Activated CD4-positive, alpha-beta T cell treated with anti-CD3 and anti-CD28 coated beads for 36 hours (primary cell): ENCODE measurements at regions of chr18 and their contacts with region 1.

Region 1: GRCh38 chr18:62714671-62715435 is 488 bp upstream of the PHLPP1 start:
- DNase-seq: peak; percentile 95
- ATAC-seq: peak; percentile 81
- H3K4me3 Mint-ChIP-seq: peak overlapping the region; percentile 81
- H3K27ac Mint-ChIP-seq: peak overlapping the region; percentile 69
- H3K4me1 Mint-ChIP-seq: peaks cover 28% of the 10 kb centered on the region
- H3K27me3 Mint-ChIP-seq: no peaks in the 10 kb centered on the region

Region 2: DNA sequence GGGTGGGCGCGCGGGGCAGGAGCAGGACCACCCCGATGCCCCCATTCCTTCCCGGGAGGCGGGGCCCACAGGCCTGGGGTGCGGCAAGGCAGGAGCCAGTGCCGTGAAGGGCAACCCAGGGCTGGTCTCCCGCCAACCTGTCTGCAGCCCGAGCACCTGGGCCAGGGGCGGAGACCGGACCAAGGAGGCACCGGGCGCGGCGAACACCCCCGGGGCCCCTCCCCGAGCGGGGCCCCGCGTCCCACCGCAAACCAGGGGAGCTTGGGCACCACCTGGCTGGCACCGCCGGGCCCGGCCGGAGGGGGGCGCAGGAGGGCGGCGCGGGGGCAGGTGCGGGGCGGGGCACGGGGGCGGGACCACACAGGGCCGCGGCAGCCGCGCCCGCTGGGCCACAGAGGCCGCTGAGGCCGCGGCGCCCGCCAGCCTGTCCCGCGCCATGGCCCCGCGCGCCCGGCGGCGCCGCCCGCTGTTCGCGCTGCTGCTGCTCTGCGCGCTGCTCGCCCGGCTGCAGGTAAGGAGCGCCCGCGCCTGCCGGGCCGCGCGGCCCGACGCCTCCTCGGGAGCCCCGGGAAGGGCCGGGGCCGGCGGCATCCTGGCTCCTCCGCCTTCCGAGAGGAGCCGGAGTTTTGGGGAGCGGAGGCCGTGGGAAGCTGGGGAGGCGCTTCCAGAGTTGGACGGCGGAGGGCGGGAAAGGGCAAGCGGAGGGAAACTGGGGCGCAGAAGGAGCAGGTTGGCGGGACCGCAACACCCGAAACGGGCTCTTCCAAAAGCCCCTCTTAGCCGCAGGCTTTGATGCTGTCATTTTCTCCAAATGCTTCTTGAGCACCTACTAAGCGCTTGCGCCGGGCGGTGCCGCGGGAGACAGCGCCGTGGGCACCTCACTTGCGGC is 389.7 kb before region 1 on chr18 and contains the start of gene TNFRSF11A:
- CTCF ChIA-PET with region 1: no interaction called
- POLR2A ChIA-PET with region 1: no interaction called
- intact Hi-C with region 1: loop called in 1 of 2 experiments (anchors 5 kb)
- DNase-seq: peak; percentile 85
- ATAC-seq: peak; percentile 77
- H3K4me3 Mint-ChIP-seq: peak within 1 kb of the TSS; percentile 78
- H3K27ac Mint-ChIP-seq: peak within 1 kb of the TSS; percentile 64
- H3K4me1 Mint-ChIP-seq: peaks cover 29% of the 10 kb centered on the region
- H3K27me3 Mint-ChIP-seq: peaks cover 70% of the 10 kb centered on the region
- total RNA-seq, gene TNFRSF11A: 6.9 to 9.3 TPM

Region 3: DNA sequence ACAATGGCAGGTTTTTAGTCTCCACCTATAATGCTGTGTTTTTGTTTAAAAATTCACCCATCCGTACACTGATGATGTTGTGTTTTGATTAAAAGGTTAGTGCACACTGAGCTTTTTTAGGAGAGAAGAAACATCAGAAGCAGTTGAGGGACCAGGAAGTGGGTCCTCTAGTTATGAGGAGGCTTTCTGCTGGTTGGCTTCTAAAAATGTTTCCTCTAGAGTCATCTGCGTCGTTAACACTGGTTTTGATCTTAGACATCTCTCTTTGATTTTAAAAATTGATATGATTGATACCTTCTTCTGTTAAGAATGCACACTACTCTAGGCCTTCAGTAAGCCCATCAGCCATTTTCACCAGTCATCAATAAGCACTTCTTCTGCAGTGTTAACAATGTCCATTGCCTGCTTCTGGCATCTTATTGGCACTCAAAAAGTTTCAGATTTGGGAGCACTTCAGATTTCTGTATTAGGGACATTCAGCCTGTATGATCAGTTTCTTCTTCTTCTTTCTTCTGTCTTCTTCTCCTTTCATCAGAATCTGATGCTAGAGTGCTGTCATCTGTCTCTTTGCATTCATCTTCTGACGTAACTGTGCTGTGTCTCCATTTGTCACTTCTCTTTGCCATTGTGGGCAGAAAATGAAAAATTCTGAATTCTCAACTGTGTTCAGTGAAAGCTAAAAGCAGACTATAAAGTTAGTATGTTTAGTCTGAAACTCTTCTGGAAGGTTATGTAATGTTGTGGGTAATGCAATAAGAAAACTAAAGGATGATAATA is 56.8 kb after region 1 on chr18:
- CTCF ChIA-PET with region 1: interaction called, 5 read pairs
- POLR2A ChIA-PET with region 1: no interaction called
- intact Hi-C with region 1: loop called in 1 of 2 experiments (anchors 2 kb)
- DNase-seq: peak; percentile 13
- ATAC-seq: peak; percentile 94
- H3K4me3 Mint-ChIP-seq: no peak overlapping the region
- H3K27ac Mint-ChIP-seq: peak overlapping the region; percentile 21
- H3K4me1 Mint-ChIP-seq: peaks cover 28% of the 10 kb centered on the region
- H3K27me3 Mint-ChIP-seq: no peaks in the 10 kb centered on the region

Region 4: GRCh38 chr18:62957885-62958472 is 243.1 kb after region 1 on chr18:
- CTCF ChIA-PET with region 1: interaction called, 10 read pairs
- POLR2A ChIA-PET with region 1: no interaction called
- intact Hi-C with region 1: loop called (anchors 1 kb)
- DNase-seq: peak; percentile 74
- ATAC-seq: peak; percentile 84
- H3K4me3 Mint-ChIP-seq: no peak overlapping the region
- H3K27ac Mint-ChIP-seq: no peak overlapping the region
- H3K4me1 Mint-ChIP-seq: peaks cover 9% of the 10 kb centered on the region
- H3K27me3 Mint-ChIP-seq: no peaks in the 10 kb centered on the region

Region 5: DNA sequence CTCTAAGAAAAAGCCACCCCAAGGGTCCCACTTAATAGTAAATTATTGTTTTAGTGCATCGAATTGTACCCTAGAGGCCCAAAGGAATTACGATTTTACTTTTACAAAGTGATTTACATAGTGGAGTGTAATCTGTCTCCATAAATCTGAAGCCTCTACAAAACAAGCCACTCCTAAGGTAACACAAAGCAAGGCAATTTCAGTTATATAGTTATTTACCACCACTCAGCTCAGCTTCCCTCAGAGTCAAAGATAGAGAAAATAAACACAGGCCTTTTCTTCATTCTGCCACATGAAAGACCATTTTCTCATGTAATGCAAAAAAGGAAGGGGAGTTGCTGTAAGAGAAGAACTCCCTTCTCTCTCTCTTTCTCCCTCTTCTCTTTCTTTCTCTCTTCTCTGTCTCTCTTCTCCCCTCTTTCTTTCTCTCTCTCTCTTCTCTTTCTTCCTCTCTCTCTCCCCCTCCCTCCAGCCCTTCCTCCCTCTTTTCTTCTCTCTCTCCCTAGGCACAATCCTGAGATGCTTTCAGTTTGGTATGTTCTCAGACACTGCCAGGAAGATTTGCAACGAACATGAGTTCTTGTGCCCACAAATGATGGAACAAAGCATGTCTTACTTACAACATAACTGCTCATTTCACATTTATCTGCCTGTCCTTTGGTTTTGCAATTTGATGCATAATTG is 340.2 kb after region 1 on chr18:
- CTCF ChIA-PET with region 1: no interaction called
- POLR2A ChIA-PET with region 1: no interaction called
- intact Hi-C with region 1: no loop called
- DNase-seq: no peak
- ATAC-seq: no peak
- H3K4me3 Mint-ChIP-seq: no peak overlapping the region
- H3K27ac Mint-ChIP-seq: no peak overlapping the region
- H3K4me1 Mint-ChIP-seq: peaks cover 10% of the 10 kb centered on the region
- H3K27me3 Mint-ChIP-seq: no peaks in the 10 kb centered on the region

Region 6: GRCh38 chr18:63161761-63162195 is 446.9 kb after region 1 on chr18:
- CTCF ChIA-PET with region 1: no interaction called
- POLR2A ChIA-PET with region 1: interaction called, 3 read pairs
- intact Hi-C with region 1: loop called (anchors 2 to 5 kb)
- DNase-seq: peak; percentile 90
- ATAC-seq: peak; percentile 79
- H3K4me3 Mint-ChIP-seq: peak overlapping the region; percentile 73
- H3K27ac Mint-ChIP-seq: peak overlapping the region; percentile 95
- H3K4me1 Mint-ChIP-seq: peaks cover 78% of the 10 kb centered on the region
- H3K27me3 Mint-ChIP-seq: no peaks in the 10 kb centered on the region